PC-9 (cell line): ENCODE measurements at regions of chr6 and their contacts with region 1.

Region 1: GRCh38 chr6:13229205-13230085 is 98.9 kb downstream of the TBC1D7 start:
- DNase-seq: peak; percentile 28 to 49
- H3K4me3 ChIP-seq: no peak overlapping the region
- H3K27ac ChIP-seq: no peak overlapping the region
- H3K4me1 ChIP-seq: no peaks in the 10 kb centered on the region
- H3K27me3 ChIP-seq: peaks cover 59% of the 10 kb centered on the region
- CTCF ChIP-seq: peak; percentile 62

Region 2: DNA sequence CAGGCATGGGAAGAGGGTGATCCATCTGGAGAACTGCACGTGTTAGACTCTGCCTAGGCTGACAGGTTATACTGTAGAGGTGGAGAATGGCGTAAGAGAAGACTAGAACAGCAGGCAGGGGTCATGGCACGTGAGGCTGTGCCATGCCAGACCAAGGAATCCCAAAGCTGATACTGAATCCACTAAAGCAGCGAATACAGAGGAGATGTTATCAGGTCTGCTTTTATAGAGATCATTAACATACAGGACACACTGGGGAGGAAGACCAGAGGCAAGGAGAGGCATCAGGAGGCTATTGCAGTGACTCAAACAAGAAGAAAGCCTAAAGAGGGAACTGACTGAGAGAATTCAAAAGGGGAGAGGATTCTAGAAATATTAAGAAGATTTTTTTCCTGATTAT is 500.0 kb before region 1 on chr6:
- CTCF ChIA-PET with region 1: no interaction called
- POLR2A ChIA-PET with region 1: no interaction called
- intact Hi-C with region 1: no loop called
- DNase-seq: no peak
- H3K4me3 ChIP-seq: no peak overlapping the region
- H3K27ac ChIP-seq: no peak overlapping the region
- H3K4me1 ChIP-seq: no peaks in the 10 kb centered on the region
- H3K27me3 ChIP-seq: peaks cover 16% of the 10 kb centered on the region; the same call in 1 of the 2 replicates
- CTCF ChIP-seq: no peak

Region 3: GRCh38 chr6:13319891-13320564 is 90.6 kb after region 1 on chr6:
- CTCF ChIA-PET with region 1: no interaction called
- POLR2A ChIA-PET with region 1: no interaction called
- intact Hi-C with region 1: no loop called
- DNase-seq: no peak
- H3K4me3 ChIP-seq: no peak overlapping the region
- H3K27ac ChIP-seq: no peak overlapping the region
- H3K4me1 ChIP-seq: no peaks in the 10 kb centered on the region
- H3K27me3 ChIP-seq: no peaks in the 10 kb centered on the region
- CTCF ChIP-seq: no peak

Region 4: GRCh38 chr6:13336553-13336952 is 107.1 kb after region 1 on chr6:
- CTCF ChIA-PET with region 1: no interaction called
- POLR2A ChIA-PET with region 1: no interaction called
- intact Hi-C with region 1: no loop called
- DNase-seq: peak; percentile 52 to 80
- H3K4me3 ChIP-seq: no peak overlapping the region
- H3K27ac ChIP-seq: no peak overlapping the region
- H3K4me1 ChIP-seq: no peaks in the 10 kb centered on the region; the same call in 1 of the 2 replicates
- H3K27me3 ChIP-seq: no peaks in the 10 kb centered on the region
- CTCF ChIP-seq: peak; percentile 98

Region 5: GRCh38 chr6:13373488-13373886 is 144.0 kb after region 1 on chr6:
- CTCF ChIA-PET with region 1: interaction called, 10 read pairs
- POLR2A ChIA-PET with region 1: no interaction called
- intact Hi-C with region 1: no loop called
- DNase-seq: no peak
- H3K4me3 ChIP-seq: no peak overlapping the region
- H3K27ac ChIP-seq: no peak overlapping the region
- H3K4me1 ChIP-seq: no peaks in the 10 kb centered on the region
- H3K27me3 ChIP-seq: no peaks in the 10 kb centered on the region
- CTCF ChIP-seq: no peak